ENCODE measurements at regions of chr1 and their contacts with region 1.

Region 1: GRCh38 chr1:108746372-108747205 is at the start of gene STXBP3:
- DNase-seq: peak; percentile 99
- ATAC-seq: peak; percentile 90
- H3K4me3 ChIP-seq: peak within 1 kb of the TSS; percentile 95
- H3K27ac ChIP-seq: peak within 1 kb of the TSS; percentile 62
- H3K4me1 ChIP-seq: peaks cover 7% of the 10 kb centered on the region
- H3K27me3 ChIP-seq: no peaks in the 10 kb centered on the region
- CTCF ChIP-seq: peak; percentile 90
- total RNA-seq, gene STXBP3: 14.8 and 17.2 TPM in 2 replicates

Region 2: DNA sequence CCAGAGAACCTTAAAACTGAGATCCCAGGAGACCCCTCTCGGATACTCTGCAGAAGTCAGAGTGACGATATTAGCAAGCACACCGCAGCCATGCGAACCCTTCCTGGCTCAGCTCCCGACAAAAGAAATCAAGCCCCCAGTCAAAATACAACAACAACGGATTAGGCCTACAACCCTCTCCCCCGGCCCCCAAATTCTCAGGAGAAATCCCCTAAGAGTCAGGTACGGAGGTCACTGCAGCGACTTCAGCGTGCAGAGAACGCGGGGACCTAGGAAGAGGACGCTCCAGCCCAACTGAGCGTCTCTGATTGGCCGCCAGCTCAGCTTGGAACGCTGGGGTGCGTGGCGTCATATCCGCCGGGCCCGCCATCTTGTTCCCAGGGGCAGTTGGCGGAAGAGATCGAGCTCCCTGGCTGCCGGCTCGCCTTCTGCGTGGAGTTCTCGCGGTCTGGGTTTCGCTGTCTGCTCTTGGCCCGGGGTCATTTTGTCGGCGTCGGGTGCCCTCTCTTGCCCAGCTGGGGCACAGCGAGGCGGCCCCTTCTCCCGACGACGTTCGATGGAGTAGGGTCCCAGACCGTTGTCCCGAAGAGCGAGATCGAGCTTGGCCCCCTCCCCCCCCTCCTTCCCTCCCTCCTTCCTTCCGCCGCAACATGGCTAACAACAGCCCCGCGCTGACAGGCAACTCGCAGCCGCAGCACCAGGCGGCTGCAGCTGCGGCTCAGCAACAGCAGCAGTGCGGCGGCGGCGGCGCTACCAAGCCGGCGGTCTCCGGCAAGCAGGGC is 54.5 kb before region 1 on chr1 and contains the start of gene PRPF38B:
- CTCF ChIA-PET with region 1: no interaction called
- POLR2A ChIA-PET with region 1: no interaction called
- intact Hi-C with region 1: loop called (anchors 1 kb)
- DNase-seq: peak; percentile 90
- ATAC-seq: peak; percentile 93
- H3K4me3 ChIP-seq: peak within 1 kb of the TSS; percentile 100
- H3K27ac ChIP-seq: peak within 1 kb of the TSS; percentile 82
- H3K4me1 ChIP-seq: peaks cover 17% of the 10 kb centered on the region
- H3K27me3 ChIP-seq: no peaks in the 10 kb centered on the region
- CTCF ChIP-seq: no peak
- total RNA-seq, gene PRPF38B: 20.2 and 21.9 TPM in 2 replicates

Region 3: GRCh38 chr1:108703939-108704900 is 42.4 kb before region 1 on chr1:
- CTCF ChIA-PET with region 1: no interaction called
- POLR2A ChIA-PET with region 1: no interaction called
- intact Hi-C with region 1: loop called (anchors 1 kb)
- DNase-seq: peak; percentile 78
- ATAC-seq: peak; percentile 91
- H3K4me3 ChIP-seq: no peak overlapping the region
- H3K27ac ChIP-seq: peak overlapping the region; percentile 17; the same call in 1 of the 2 replicates
- H3K4me1 ChIP-seq: peaks cover 16% of the 10 kb centered on the region
- H3K27me3 ChIP-seq: no peaks in the 10 kb centered on the region
- CTCF ChIP-seq: no peak

Region 4: GRCh38 chr1:108732398-108732797 is 14.2 kb before region 1 on chr1:
- CTCF ChIA-PET with region 1: interaction called, 3 read pairs
- POLR2A ChIA-PET with region 1: no interaction called
- intact Hi-C with region 1: loop called (anchors 1 kb)
- DNase-seq: peak; percentile 61
- ATAC-seq: peak; percentile 79
- H3K4me3 ChIP-seq: no peak overlapping the region
- H3K27ac ChIP-seq: no peak overlapping the region
- H3K4me1 ChIP-seq: no peaks in the 10 kb centered on the region
- H3K27me3 ChIP-seq: no peaks in the 10 kb centered on the region
- CTCF ChIP-seq: no peak

Region 5: GRCh38 chr1:108897865-108898720 is 151.5 kb after region 1 on chr1:
- CTCF ChIA-PET with region 1: interaction called, 4 read pairs
- POLR2A ChIA-PET with region 1: no interaction called
- intact Hi-C with region 1: loop called (anchors 5 kb)
- DNase-seq: peak; percentile 80
- ATAC-seq: peak; percentile 60
- H3K4me3 ChIP-seq: no peak overlapping the region
- H3K27ac ChIP-seq: no peak overlapping the region
- H3K4me1 ChIP-seq: peaks cover 14% of the 10 kb centered on the region
- H3K27me3 ChIP-seq: no peaks in the 10 kb centered on the region
- CTCF ChIP-seq: peak; percentile 84

Region 6: DNA sequence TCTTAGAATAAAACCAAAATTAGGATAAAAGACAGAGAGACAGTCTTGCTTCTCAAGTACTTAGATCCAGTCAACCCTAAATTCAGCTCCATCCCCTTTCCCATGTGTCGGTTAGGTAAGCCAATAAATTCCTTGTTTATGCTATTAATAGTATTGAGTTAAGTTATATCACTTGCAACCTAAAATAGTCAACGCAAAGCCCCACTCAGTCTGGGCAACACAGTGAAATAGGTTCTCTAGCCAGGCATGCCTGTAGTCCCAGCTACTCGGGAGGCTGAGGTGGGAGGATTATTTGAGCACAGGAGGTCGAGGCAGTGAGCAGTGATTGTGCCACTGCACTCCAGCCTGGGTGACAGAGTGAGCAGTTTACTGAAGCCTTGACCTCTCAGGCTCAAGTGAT is 314.6 kb after region 1 on chr1:
- CTCF ChIA-PET with region 1: no interaction called
- POLR2A ChIA-PET with region 1: no interaction called
- intact Hi-C with region 1: no loop called
- DNase-seq: no peak
- ATAC-seq: no peak
- H3K4me3 ChIP-seq: no peak overlapping the region
- H3K27ac ChIP-seq: no peak overlapping the region
- H3K4me1 ChIP-seq: no peaks in the 10 kb centered on the region
- H3K27me3 ChIP-seq: no peaks in the 10 kb centered on the region
- CTCF ChIP-seq: no peak

Region 7: DNA sequence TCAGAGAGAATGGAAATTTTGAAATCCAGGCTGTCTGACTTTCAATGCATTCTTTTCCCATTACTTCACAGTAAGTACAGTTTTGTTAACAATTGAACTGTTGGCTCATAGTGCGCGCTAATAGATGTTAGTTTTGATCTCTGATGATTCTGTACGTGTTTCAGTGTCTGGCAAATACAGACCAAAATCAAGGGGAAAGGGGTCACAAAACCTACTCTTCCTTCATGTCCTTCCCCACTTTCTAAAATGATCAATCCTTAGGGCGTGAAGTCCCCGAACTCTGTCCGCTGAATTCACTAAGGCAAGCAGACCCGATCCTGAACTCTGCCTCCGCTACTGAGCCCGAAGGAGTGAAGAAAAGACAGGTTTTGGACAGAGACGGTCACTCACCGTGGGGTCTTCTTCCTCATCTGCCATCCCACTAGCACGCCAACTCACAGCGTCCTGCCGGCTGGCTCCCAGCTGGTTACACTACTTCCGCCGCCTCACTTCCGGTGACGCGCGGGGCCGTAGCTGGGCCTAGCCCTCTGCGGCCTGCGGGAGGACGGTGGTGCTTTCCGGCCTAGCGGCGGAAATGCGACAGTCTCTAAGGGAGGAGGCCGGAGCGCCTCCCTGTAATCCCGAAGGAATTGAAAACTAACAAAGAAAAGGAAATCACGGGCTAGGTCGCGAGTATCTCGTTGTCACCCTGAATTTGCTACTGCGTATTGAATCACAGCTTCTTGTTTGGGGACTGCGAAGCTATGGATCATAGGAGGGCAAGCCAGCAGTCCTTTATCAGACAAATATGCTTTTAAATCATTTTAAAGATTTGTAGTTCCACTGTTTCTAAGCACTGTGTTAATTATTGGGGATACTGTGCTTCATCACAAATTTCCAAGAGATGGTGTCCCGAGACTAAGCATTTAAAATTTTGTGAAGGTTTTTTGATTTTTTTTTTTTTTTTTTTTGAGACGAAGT is 329.2 kb after region 1 on chr1 and contains the start of gene TAF13:
- CTCF ChIA-PET with region 1: no interaction called
- POLR2A ChIA-PET with region 1: no interaction called
- intact Hi-C with region 1: loop called (anchors 5 kb)
- DNase-seq: peak; percentile 95
- ATAC-seq: peak; percentile 100
- H3K4me3 ChIP-seq: peak within 1 kb of the TSS; percentile 81
- H3K27ac ChIP-seq: peak within 1 kb of the TSS; percentile 70
- H3K4me1 ChIP-seq: peaks cover 7% of the 10 kb centered on the region; the same call in 1 of the 2 replicates
- H3K27me3 ChIP-seq: no peaks in the 10 kb centered on the region
- CTCF ChIP-seq: no peak
- total RNA-seq, gene TAF13: 23.5 and 32.0 TPM in 2 replicates

Measured in PC-3 (cell line).